ENCODE measurements at regions of chr5 and their contacts with region 1.

Region 1: GRCh38 chr5:138508963-138509362 is 34.1 kb downstream of the ETF1 start:
- DNase-seq: no peak
- ATAC-seq: no peak
- H3K4me3 ChIP-seq: no peak overlapping the region
- H3K4me3 Mint-ChIP-seq: no peak overlapping the region
- H3K27ac ChIP-seq: no peak overlapping the region
- H3K27ac Mint-ChIP-seq: no peak overlapping the region
- H3K4me1 ChIP-seq: no peaks in the 10 kb centered on the region
- H3K4me1 Mint-ChIP-seq: no peaks in the 10 kb centered on the region
- H3K27me3 ChIP-seq: no peaks in the 10 kb centered on the region
- H3K27me3 Mint-ChIP-seq: no peaks in the 10 kb centered on the region
- CTCF ChIP-seq: no peak

Region 2: GRCh38 chr5:137856916-137857862 is 651.8 kb before region 1 on chr5:
- CTCF ChIA-PET with region 1: no interaction called
- POLR2A ChIA-PET with region 1: no interaction called
- intact Hi-C with region 1: no loop called
- DNase-seq: no peak
- ATAC-seq: no peak
- H3K4me3 ChIP-seq: no peak overlapping the region
- H3K4me3 Mint-ChIP-seq: no peak overlapping the region
- H3K27ac ChIP-seq: no peak overlapping the region
- H3K27ac Mint-ChIP-seq: no peak overlapping the region
- H3K4me1 ChIP-seq: peaks cover 3% of the 10 kb centered on the region
- H3K4me1 Mint-ChIP-seq: peaks cover 18% of the 10 kb centered on the region
- H3K27me3 ChIP-seq: no peaks in the 10 kb centered on the region
- H3K27me3 Mint-ChIP-seq: no peaks in the 10 kb centered on the region
- CTCF ChIP-seq: no peak

Region 3: DNA sequence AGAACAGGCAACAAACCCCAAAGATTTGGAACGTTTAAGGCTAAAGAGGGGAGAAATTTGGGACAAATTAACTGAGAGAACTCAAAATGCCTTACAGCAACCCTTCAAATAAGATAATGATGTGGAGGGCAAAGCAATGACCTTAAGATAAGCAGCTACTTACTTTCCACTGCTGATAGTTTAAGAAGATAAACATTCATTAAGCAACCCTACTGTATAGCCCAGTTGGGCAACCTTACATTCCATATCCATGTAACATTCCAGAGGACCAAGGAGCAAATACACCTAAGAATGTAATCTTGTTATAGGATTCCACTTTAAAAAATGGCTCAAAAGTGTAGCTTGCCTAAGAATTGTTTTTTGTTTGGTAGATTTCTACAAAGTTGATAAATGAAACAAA is 19.2 kb after region 1 on chr5:
- CTCF ChIA-PET with region 1: interaction called, 10 read pairs
- POLR2A ChIA-PET with region 1: no interaction called
- intact Hi-C with region 1: loop called in 1 of 2 experiments (anchors 2 kb)
- DNase-seq: no peak
- ATAC-seq: no peak
- H3K4me3 ChIP-seq: no peak overlapping the region
- H3K4me3 Mint-ChIP-seq: no peak overlapping the region
- H3K27ac ChIP-seq: no peak overlapping the region
- H3K27ac Mint-ChIP-seq: no peak overlapping the region
- H3K4me1 ChIP-seq: peaks cover 11% of the 10 kb centered on the region
- H3K4me1 Mint-ChIP-seq: peaks cover 56% of the 10 kb centered on the region
- H3K27me3 ChIP-seq: no peaks in the 10 kb centered on the region
- H3K27me3 Mint-ChIP-seq: no peaks in the 10 kb centered on the region
- CTCF ChIP-seq: no peak